OCI-LY7 (cell line): ENCODE measurements at regions of chr9 and their contacts with region 1.

Region 1: GRCh38 chr9:15104826-15105420 is 194.7 kb upstream of the FREM1 start:
- DNase-seq: peak; percentile 39
- H3K4me3 ChIP-seq: no peak overlapping the region
- H3K27ac ChIP-seq: no peak overlapping the region
- H3K4me1 ChIP-seq: no peaks in the 10 kb centered on the region
- CTCF ChIP-seq: peak; percentile 82

Region 2: DNA sequence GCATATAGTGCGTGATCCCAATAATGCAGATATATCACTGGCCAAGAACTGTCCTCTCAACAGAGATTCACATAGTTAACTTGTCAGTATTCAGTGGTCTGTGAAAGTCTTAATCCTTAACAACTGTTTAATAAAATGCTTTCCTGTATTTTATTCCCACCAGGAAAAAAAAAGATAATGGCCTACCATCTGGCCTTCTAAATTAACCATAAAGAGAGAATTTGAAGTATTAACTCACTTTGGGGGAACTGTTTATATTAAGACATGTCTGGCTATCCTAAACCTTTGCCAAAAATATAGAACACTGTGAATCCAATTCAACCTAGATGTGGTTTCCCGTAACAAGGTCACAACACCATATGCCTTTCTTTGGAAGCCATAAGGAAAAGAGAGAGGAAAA is 193.9 kb before region 1 on chr9:
- CTCF ChIA-PET with region 1: no interaction called
- POLR2A ChIA-PET with region 1: no interaction called
- intact Hi-C with region 1: no loop called
- DNase-seq: no peak
- H3K4me3 ChIP-seq: no peak overlapping the region
- H3K27ac ChIP-seq: no peak overlapping the region
- H3K4me1 ChIP-seq: no peaks in the 10 kb centered on the region
- CTCF ChIP-seq: no peak

Region 3: DNA sequence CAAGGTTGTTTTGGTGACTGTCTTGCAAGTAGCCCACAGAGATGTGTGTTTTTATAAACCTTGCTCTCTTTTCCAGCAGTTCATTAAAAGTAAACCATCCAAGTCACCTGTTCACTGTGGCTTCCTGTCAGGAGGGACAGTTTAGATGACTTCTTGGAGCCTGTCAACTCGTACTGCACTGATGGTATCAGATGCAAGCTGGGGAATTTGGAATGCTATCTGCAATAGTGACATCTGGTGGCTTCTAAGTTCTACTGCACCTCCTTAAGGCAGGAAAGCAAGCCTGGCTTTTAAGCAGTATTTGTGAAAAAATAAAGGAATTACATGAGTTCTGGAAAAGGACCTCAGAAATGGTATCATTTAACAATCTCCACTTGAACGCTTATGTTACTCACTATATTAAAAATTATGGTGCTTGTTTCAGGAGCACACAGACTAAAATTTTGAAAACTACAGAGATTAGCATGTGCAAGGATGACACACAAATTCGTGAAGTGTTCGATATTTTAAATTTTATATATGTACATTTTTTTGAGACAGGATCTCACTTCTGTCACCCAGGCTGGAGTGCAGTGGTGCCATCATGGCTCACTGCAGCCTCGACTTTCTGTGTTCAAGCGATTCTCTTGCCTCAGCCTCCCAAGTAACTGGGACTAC is 38.1 kb after region 1 on chr9:
- CTCF ChIA-PET with region 1: no interaction called
- POLR2A ChIA-PET with region 1: no interaction called
- intact Hi-C with region 1: loop called (anchors 2 kb)
- DNase-seq: peak; percentile 46
- H3K4me3 ChIP-seq: no peak overlapping the region
- H3K27ac ChIP-seq: no peak overlapping the region
- H3K4me1 ChIP-seq: no peaks in the 10 kb centered on the region
- CTCF ChIP-seq: peak; percentile 87

Region 4: GRCh38 chr9:15249042-15249818 is 144.3 kb after region 1 on chr9:
- CTCF ChIA-PET with region 1: no interaction called
- POLR2A ChIA-PET with region 1: no interaction called
- intact Hi-C with region 1: no loop called
- DNase-seq: no peak
- H3K4me3 ChIP-seq: no peak overlapping the region
- H3K27ac ChIP-seq: no peak overlapping the region
- H3K4me1 ChIP-seq: no peaks in the 10 kb centered on the region
- CTCF ChIP-seq: no peak